Naive thymus-derived CD8-positive, alpha-beta T cell (primary cell): ENCODE measurements at regions of chr2 and their contacts with region 1.

Region 1: GRCh38 chr2:38565333-38565732 is 37.4 kb downstream of the HNRNPLL start:
- DNase-seq: no peak
- ATAC-seq: no peak
- H3K4me3 Mint-ChIP-seq: no peak overlapping the region
- H3K27ac Mint-ChIP-seq: no peak overlapping the region
- H3K4me1 Mint-ChIP-seq: no peaks in the 10 kb centered on the region
- H3K27me3 Mint-ChIP-seq: no peaks in the 10 kb centered on the region

Region 2: GRCh38 chr2:38201784-38202183 is 363.5 kb before region 1 on chr2:
- POLR2A ChIA-PET with region 1: interaction called, 10 read pairs
- DNase-seq: no peak
- ATAC-seq: no peak
- H3K4me3 Mint-ChIP-seq: no peak overlapping the region
- H3K27ac Mint-ChIP-seq: no peak overlapping the region
- H3K4me1 Mint-ChIP-seq: no peaks in the 10 kb centered on the region
- H3K27me3 Mint-ChIP-seq: peaks cover 4 to 50% (median 26%) of the 10 kb centered on the region in 5 donors